H1 (cell line): ENCODE measurements at regions of chr14 and their contacts with region 1.

Region 1: GRCh38 chr14:64952598-64953309 is 10.2 kb upstream of the GPX2 start:
- DNase-seq: no peak
- H3K4me3 ChIP-seq: no peak overlapping the region
- H3K27ac ChIP-seq: no peak overlapping the region
- H3K4me1 ChIP-seq: peaks cover 5 to 16% (median 15%) of the 10 kb centered on the region in 4 experiments; a peak in 6 of 7 replicates
- H3K27me3 ChIP-seq: no peaks in the 10 kb centered on the region
- CTCF ChIP-seq: peak; percentile 46 to 69 (median 53)
- EP300 ChIP-seq: no peak
- POLR2A ChIP-seq: no peak
- RAD21 ChIP-seq: peak; percentile 34 to 48; a peak in 3 of 4 replicates

Region 2: DNA sequence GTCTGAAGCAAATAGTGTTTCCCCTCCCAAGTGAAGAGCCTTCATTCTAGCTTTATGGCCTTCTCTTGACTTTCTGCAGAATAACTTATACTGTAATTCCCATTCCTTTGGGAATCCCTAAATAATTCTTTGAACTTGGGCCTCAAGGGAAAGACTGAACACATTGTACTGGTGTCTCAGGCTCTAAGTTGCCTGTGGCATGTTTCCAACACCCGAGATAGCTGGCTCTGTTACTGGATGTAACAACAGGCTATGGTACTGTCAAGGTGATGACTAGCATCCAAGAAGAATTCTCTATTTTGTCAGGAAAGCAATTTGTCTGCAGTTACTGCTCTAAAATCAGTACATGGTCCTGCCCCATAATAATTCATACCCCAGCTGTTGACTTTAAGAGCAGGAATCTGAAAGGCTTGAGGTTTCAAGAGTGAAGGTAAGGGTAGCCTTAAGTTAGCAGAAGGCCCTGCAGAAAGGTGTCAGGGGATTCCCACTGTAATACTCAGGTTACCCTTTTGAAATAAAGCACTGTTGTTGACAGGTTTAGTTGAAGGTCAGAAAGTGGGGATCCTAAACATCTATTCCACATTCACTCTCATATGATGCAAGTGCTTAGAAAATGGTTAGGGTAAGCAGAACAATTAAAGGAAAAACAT is 15.5 kb before region 1 on chr14:
- CTCF ChIA-PET with region 1: interaction called, 12 read pairs
- POLR2A ChIA-PET with region 1: interaction called, 6 read pairs
- DNase-seq: no peak
- H3K4me3 ChIP-seq: no peak overlapping the region
- H3K27ac ChIP-seq: no peak overlapping the region
- H3K4me1 ChIP-seq: peaks cover 0 to under 1% (median 0%) of the 10 kb centered on the region in 4 experiments; a peak in 1 of 7 replicates
- H3K27me3 ChIP-seq: no peaks in the 10 kb centered on the region
- CTCF ChIP-seq: no peak
- EP300 ChIP-seq: no peak
- POLR2A ChIP-seq: no peak
- RAD21 ChIP-seq: no peak

Region 3: GRCh38 chr14:64942531-64943111 is 10.1 kb before region 1 on chr14 and contains the start of gene GPX2:
- CTCF ChIA-PET with region 1: interaction called, 16 read pairs
- POLR2A ChIA-PET with region 1: interaction called, 6 read pairs
- DNase-seq: no peak
- H3K4me3 ChIP-seq: no peak within 1 kb of the TSS
- H3K27ac ChIP-seq: no peak within 1 kb of the TSS
- H3K4me1 ChIP-seq: peaks cover 0 to 8% (median 2%) of the 10 kb centered on the region in 4 experiments; a peak in 4 of 7 replicates
- H3K27me3 ChIP-seq: no peaks in the 10 kb centered on the region
- CTCF ChIP-seq: no peak
- EP300 ChIP-seq: no peak
- POLR2A ChIP-seq: no peak
- RAD21 ChIP-seq: no peak
- total RNA-seq, gene GPX2: 0.30 and 0.50 TPM in 2 replicates

Region 4: DNA sequence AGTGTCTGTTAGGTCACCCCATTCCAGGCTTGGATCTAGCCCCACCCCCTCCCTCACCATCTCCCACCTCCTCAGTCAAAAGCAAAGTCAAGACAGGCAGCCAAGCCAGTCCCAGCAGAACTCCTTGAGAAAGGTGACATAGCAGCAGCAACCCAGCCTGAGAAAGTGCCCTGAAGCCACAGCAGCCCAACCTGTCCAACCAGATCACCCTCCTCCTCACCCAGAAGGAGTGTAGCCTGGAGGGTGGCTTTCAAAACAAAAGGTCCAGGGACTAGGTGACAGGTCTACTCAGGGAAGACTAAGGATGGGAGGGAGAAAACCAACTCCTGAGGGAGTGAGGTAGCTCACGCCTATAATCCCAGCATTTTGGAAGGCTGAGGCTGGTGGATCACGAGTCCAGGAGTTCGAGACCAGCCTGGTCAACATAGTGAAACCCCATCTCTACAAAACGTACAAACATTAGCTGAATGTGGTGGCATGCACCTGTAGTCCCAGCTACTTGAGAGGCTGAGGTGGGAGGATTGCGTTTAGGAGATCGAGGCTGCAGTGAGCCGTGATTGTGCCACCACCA is 14.3 kb after region 1 on chr14:
- CTCF ChIA-PET with region 1: interaction called, 45 read pairs
- POLR2A ChIA-PET with region 1: interaction called, 9 read pairs
- DNase-seq: no peak
- H3K4me3 ChIP-seq: no peak overlapping the region
- H3K27ac ChIP-seq: no peak overlapping the region
- H3K4me1 ChIP-seq: peaks cover 0 to 25% (median 14%) of the 10 kb centered on the region in 4 experiments; a peak in 6 of 7 replicates
- H3K27me3 ChIP-seq: peaks cover 0 to 12% (median 2%) of the 10 kb centered on the region in 4 experiments; a peak in 3 of 7 replicates
- CTCF ChIP-seq: no peak
- EP300 ChIP-seq: no peak
- POLR2A ChIP-seq: no peak
- RAD21 ChIP-seq: no peak

Region 5: GRCh38 chr14:64971943-64972791 is 19.4 kb after region 1 on chr14 and contains the start of gene RAB15:
- CTCF ChIA-PET with region 1: interaction called, 45 read pairs
- POLR2A ChIA-PET with region 1: interaction called, 9 read pairs
- DNase-seq: no peak
- H3K4me3 ChIP-seq: peak within 1 kb of the TSS; percentile 60 to 94 (median 72)
- H3K27ac ChIP-seq: no peak within 1 kb of the TSS
- H3K4me1 ChIP-seq: peaks cover 5 to 36% (median 18%) of the 10 kb centered on the region in 4 experiments
- H3K27me3 ChIP-seq: peaks cover 0 to 21% (median 8%) of the 10 kb centered on the region in 4 experiments; a peak in 4 of 7 replicates
- CTCF ChIP-seq: no peak
- EP300 ChIP-seq: no peak
- POLR2A ChIP-seq: no peak
- RAD21 ChIP-seq: no peak
- total RNA-seq, gene RAB15: 58.1 and 59.2 TPM in 2 replicates

Region 6: DNA sequence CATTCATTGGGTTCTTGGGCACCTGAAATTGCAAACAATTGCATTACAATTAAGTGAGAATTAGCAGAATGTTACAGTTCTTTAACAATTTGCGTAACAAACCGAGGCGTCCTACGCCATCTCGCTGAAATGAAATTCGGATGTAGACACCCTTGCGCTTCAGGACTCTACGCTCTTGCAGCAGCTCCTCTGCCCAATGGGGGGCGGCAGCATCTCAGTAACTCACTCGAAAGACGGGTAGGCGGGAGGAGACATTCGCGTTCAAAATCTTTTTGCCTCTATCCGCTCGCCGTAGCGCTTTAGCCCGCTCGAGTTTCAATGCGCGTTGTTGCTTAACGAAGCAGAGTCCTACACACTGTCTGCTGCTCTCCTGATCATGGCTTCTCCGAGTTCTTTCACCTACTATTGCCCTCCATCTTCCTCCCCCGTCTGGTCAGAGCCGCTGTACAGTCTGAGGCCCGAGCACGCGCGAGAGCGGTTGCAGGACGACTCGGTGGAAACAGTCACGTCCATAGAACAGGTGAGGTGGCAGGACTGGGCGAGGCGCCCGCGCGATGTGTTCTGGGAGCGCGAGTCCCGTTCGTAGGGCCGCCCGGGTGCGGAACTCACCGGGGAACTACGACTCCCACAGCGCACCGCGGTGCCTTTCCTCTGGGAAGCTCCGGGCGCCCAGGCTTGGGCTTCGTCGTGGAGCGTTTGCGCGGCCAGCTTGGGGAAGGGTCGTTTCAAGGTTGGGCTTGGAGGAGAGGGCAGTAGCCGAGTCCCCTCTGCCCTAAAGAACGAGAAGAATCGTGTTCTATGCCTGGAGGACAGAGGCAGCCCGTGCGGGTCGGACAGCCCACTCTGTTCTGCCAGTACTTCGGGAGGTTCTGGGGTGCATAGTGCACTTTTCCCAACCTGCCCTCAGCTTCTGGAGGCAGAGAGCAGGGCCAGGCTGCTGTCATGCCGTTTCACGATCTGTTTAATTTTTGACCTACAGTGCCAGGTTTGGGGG is 34.1 kb after region 1 on chr14 and contains the start of gene FNTB:
- CTCF ChIA-PET with region 1: interaction called, 25 read pairs
- POLR2A ChIA-PET with region 1: interaction called, 6 read pairs
- DNase-seq: peak; percentile 90 to 95
- H3K4me3 ChIP-seq: peak within 1 kb of the TSS; percentile 55 to 75 (median 74)
- H3K27ac ChIP-seq: peak within 1 kb of the TSS; percentile 42; the same call in 1 of the 2 replicates
- H3K4me1 ChIP-seq: peaks cover 0 to 2% (median 0%) of the 10 kb centered on the region in 4 experiments; a peak in 2 of 7 replicates
- H3K27me3 ChIP-seq: no peaks in the 10 kb centered on the region; a peak in 2 of 7 replicates
- CTCF ChIP-seq: peak; percentile 77 to 93 (median 85)
- EP300 ChIP-seq: no peak
- POLR2A ChIP-seq: peak in 1 of 2 experiments; percentile 69; a peak in 2 of 3 replicates
- RAD21 ChIP-seq: peak; percentile 84 to 87
- total RNA-seq, gene FNTB: 13.8 and 16.0 TPM in 2 replicates

Region 7: GRCh38 chr14:65019944-65020566 is 67.3 kb after region 1 on chr14:
- CTCF ChIA-PET with region 1: interaction called, 12 read pairs
- POLR2A ChIA-PET with region 1: no interaction called
- DNase-seq: no peak
- H3K4me3 ChIP-seq: no peak overlapping the region
- H3K27ac ChIP-seq: no peak overlapping the region
- H3K4me1 ChIP-seq: no peaks in the 10 kb centered on the region
- H3K27me3 ChIP-seq: no peaks in the 10 kb centered on the region
- CTCF ChIP-seq: peak in 2 of 3 experiments; percentile 64 to 67; a peak in 3 of 4 replicates
- EP300 ChIP-seq: no peak
- POLR2A ChIP-seq: no peak
- RAD21 ChIP-seq: peak; percentile 49 to 61; a peak in 3 of 4 replicates